Activated T-helper 1 cell treated with anti-CD3 and anti-CD28 coated beads, Interleukin-12 subunit alpha, Interleukin-12 subunit beta, Interleukin-2, Interleukin-4 antibody, amounts not matched to agents 30 ng/mL and 10 ng/mL and 1 ng/mL, durations not matched to agents 14 hours and 24 hours and 36 hours (primary cell): ENCODE measurements at regions of chr2 and their contacts with region 1.

Region 1: GRCh38 chr2:70340921-70341765 is 39.3 kb upstream of the FAM136A start:
- DNase-seq: peak; percentile 16
- H3K4me3 Mint-ChIP-seq: no peak overlapping the region
- H3K27ac Mint-ChIP-seq: no peak overlapping the region
- H3K4me1 Mint-ChIP-seq: no peaks in the 10 kb centered on the region
- H3K27me3 Mint-ChIP-seq: no peaks in the 10 kb centered on the region

Region 2: DNA sequence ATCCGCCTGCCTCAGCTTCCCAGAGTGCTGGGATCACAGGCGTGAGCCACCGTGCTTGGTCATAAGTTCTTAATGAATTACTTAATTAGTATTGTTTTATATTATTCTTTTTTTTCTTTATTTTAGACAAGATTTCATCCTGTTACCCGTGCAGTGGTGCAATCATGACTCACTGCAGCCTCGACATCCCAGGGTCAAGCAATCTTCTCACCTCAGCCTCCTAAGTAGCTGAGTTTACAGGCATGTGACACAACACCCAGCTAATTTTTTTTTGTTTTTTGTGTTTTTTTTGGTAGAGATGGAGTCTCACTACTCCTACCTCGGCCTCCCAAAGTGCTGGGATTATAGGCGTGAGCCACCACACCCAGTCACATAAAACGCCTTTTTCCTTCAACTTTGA is 167.6 kb before region 1 on chr2:
- intact Hi-C with region 1: no loop called
- DNase-seq: no peak
- H3K4me3 Mint-ChIP-seq: no peak overlapping the region
- H3K27ac Mint-ChIP-seq: no peak overlapping the region
- H3K4me1 Mint-ChIP-seq: no peaks in the 10 kb centered on the region
- H3K27me3 Mint-ChIP-seq: no peaks in the 10 kb centered on the region

Region 3: DNA sequence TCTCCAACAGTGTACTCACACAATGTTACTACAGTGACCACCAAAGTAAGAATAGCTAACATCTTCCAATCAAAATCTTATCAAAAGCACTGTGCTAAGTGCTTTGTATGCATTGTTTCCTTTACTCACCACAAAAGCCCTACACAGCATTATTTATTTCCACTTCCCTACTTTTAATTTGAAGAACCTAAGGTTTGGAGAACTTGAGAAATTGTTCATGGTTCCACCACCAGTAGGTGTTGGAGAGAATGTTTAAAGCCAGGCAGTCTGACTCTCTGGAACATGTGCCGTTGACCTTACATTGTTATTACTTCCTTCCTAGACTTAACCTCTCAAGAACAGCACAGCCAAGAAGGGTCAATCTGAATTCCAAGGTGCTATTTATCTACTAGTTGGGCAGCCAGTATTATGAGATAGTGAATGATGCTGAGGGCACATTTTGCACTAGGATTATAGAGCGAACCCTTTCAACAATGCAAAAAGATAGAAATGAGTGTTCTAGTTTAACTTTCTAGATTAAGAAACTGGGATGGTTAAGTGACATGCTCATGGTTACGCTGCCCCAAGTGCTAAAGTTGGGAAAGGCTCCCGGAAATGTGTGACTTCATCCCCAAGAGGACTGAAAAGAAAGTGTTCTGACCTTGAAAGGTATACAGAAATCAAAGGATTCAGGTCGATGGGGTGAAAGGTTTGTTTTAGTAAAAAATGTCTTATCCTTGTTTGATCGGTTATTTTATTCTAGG is 16.0 kb after region 1 on chr2:
- intact Hi-C with region 1: no loop called
- DNase-seq: no peak
- H3K4me3 Mint-ChIP-seq: no peak overlapping the region
- H3K27ac Mint-ChIP-seq: no peak overlapping the region
- H3K4me1 Mint-ChIP-seq: no peaks in the 10 kb centered on the region
- H3K27me3 Mint-ChIP-seq: peaks cover 4% of the 10 kb centered on the region

Region 4: GRCh38 chr2:70553584-70554337 is 212.6 kb after region 1 on chr2 and contains the start of gene TGFA:
- intact Hi-C with region 1: loop called (anchors 5 kb)
- DNase-seq: peak; percentile 46
- H3K4me3 Mint-ChIP-seq: peak within 1 kb of the TSS; percentile 82
- H3K27ac Mint-ChIP-seq: no peak within 1 kb of the TSS
- H3K4me1 Mint-ChIP-seq: peaks cover 24% of the 10 kb centered on the region
- H3K27me3 Mint-ChIP-seq: peaks cover 45% of the 10 kb centered on the region
- total RNA-seq, gene TGFA: not detected in 2 replicates

Region 5: GRCh38 chr2:70616168-70616694 is 275.1 kb after region 1 on chr2:
- intact Hi-C with region 1: loop called (anchors 1 kb)
- DNase-seq: no peak
- H3K4me3 Mint-ChIP-seq: no peak overlapping the region
- H3K27ac Mint-ChIP-seq: no peak overlapping the region
- H3K4me1 Mint-ChIP-seq: peaks cover 6% of the 10 kb centered on the region
- H3K27me3 Mint-ChIP-seq: peaks cover 11% of the 10 kb centered on the region